HCT116 (cell line): ENCODE measurements at regions of chr20 and their contacts with region 1.

Region 1: GRCh38 chr20:59102841-59103299 is 60.3 kb upstream of the PRELID3B start:
- DNase-seq: no peak
- ATAC-seq: no peak
- H3K4me3 ChIP-seq: no peak overlapping the region
- H3K27ac ChIP-seq: no peak overlapping the region
- H3K4me1 ChIP-seq: no peaks in the 10 kb centered on the region
- H3K27me3 ChIP-seq: peaks cover 35% of the 10 kb centered on the region
- CTCF ChIP-seq: no peak
- POLR2A ChIP-seq: no peak
- RAD21 ChIP-seq: no peak

Region 2: DNA sequence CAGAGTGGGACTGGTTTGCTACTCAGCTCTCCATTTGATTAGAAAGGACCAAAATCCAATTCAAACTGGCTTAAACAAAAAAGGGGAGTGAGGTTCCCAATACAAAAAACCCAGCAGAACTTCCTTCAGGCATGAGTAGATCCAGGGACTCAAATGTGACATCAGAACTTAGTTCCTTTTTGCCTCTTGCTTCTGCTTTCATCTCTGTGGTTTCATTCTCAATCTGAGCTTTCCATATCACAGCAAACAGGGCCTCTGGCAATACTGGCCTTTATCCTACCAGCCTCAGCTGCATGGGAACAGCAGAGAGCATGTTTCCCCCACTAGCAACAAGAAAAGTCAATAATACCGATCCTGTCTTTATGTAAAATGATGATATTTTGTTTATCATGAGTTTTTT is 31.7 kb before region 1 on chr20:
- CTCF ChIA-PET with region 1: no interaction called
- POLR2A ChIA-PET with region 1: no interaction called
- RAD21 ChIA-PET with region 1: no interaction called
- intact Hi-C with region 1: no loop called
- DNase-seq: no peak
- ATAC-seq: no peak
- H3K4me3 ChIP-seq: no peak overlapping the region
- H3K27ac ChIP-seq: no peak overlapping the region
- H3K4me1 ChIP-seq: peaks cover 0 to 8% of the 10 kb centered on the region in 2 experiments; a peak in 1 of 4 replicates
- H3K27me3 ChIP-seq: peaks cover 42% of the 10 kb centered on the region
- CTCF ChIP-seq: no peak
- POLR2A ChIP-seq: no peak
- RAD21 ChIP-seq: no peak

Region 3: GRCh38 chr20:59141787-59142581 is 39.1 kb after region 1 on chr20:
- CTCF ChIA-PET with region 1: no interaction called
- POLR2A ChIA-PET with region 1: no interaction called
- RAD21 ChIA-PET with region 1: no interaction called
- intact Hi-C with region 1: loop called (anchors 2 kb)
- DNase-seq: no peak
- ATAC-seq: no peak
- H3K4me3 ChIP-seq: no peak overlapping the region
- H3K27ac ChIP-seq: no peak overlapping the region
- H3K4me1 ChIP-seq: no peaks in the 10 kb centered on the region
- H3K27me3 ChIP-seq: peaks cover 20% of the 10 kb centered on the region
- CTCF ChIP-seq: no peak
- POLR2A ChIP-seq: no peak
- RAD21 ChIP-seq: no peak

Region 4: GRCh38 chr20:59175861-59176260 is 73.0 kb after region 1 on chr20:
- CTCF ChIA-PET with region 1: no interaction called
- POLR2A ChIA-PET with region 1: no interaction called
- RAD21 ChIA-PET with region 1: no interaction called
- intact Hi-C with region 1: loop called (anchors 1 kb)
- DNase-seq: no peak
- ATAC-seq: no peak
- H3K4me3 ChIP-seq: no peak overlapping the region
- H3K27ac ChIP-seq: no peak overlapping the region
- H3K4me1 ChIP-seq: no peaks in the 10 kb centered on the region
- H3K27me3 ChIP-seq: peaks cover 32% of the 10 kb centered on the region
- CTCF ChIP-seq: no peak
- POLR2A ChIP-seq: no peak
- RAD21 ChIP-seq: no peak